ENCODE measurements at regions of chr11 and their contacts with region 1.

Region 1: DNA sequence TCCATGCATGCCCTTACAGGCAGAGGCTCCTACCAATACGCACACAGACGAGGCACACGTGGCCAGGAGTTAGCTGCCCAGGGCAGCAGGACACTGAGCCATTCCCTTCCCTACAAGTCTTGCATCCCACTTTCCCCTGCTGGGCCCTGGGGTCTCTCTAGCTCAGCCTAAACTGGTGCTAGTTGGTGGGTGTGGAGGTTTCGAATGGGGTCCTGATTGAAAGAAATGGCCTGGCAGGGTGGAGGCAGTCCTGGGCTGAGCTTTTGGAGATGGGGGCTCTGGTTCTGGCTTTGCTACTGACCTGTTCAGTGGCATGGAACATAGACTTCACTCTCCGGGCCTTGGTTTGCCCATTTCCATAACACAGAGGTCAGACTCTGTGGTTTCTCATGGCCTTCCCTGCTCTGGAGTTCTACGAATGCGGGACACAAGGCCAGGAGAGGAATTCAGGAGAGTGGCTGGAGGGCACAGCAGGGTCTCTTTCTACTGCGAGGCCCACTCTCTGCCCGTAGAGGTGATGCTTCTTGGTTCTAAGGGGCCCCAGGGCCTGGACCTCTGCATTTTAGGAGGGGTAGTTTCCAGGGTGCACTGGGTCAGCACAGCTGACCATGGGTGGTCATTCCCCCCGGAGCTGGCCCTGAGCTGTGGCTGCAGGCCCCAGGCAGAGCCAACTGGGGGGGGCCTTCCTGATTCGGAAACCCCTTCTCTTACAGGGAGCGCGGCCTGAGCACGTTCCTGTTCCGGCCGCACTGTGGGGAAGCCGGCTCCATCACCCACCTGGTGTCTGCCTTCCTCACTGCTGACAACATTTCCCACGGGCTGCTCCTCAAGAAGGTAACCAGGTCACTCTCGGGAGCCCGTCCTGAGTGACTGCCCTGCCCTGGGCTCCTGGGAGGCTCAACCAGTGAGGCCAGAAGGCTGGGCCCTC is 40.0 kb downstream of the RNF141 start:
- DNase-seq: no peak
- ATAC-seq: no peak
- H3K4me3 ChIP-seq: no peak overlapping the region
- H3K27ac ChIP-seq: no peak overlapping the region
- H3K4me1 ChIP-seq: no peaks in the 10 kb centered on the region
- H3K27me3 ChIP-seq: no peaks in the 10 kb centered on the region
- CTCF ChIP-seq: no peak

Region 2: DNA sequence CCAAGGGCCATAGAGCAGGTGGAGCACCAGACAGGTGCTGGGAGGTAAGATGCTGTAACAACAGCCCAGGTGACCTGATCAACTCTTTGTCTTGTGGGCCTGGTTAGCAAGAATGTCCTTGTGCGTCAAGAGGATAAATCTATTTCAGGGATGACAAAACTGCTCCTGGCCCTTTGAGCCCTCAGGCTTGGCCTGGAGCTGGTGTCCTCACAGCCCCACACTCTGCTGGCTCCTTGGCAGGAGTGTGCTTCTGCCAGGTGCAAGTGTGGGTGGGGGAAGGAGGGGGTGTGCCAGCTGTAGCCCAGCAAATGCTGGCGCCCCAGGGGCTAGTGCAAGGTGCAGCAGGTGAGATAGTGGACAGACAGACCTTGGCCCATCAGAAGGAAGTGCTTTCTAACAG is 26.5 kb before region 1 on chr11:
- intact Hi-C with region 1: loop called in 1 of 2 experiments (anchors 1 kb)
- DNase-seq: no peak
- ATAC-seq: peak; percentile 57 to 75 (median 64)
- H3K4me3 ChIP-seq: no peak overlapping the region
- H3K27ac ChIP-seq: no peak overlapping the region
- H3K4me1 ChIP-seq: peaks cover 4% of the 10 kb centered on the region
- H3K27me3 ChIP-seq: no peaks in the 10 kb centered on the region
- CTCF ChIP-seq: no peak

Measured in psoas muscle (tissue), 8 donors.